ENCODE measurements at regions of chr19 and their contacts with region 1.

Region 1: DNA sequence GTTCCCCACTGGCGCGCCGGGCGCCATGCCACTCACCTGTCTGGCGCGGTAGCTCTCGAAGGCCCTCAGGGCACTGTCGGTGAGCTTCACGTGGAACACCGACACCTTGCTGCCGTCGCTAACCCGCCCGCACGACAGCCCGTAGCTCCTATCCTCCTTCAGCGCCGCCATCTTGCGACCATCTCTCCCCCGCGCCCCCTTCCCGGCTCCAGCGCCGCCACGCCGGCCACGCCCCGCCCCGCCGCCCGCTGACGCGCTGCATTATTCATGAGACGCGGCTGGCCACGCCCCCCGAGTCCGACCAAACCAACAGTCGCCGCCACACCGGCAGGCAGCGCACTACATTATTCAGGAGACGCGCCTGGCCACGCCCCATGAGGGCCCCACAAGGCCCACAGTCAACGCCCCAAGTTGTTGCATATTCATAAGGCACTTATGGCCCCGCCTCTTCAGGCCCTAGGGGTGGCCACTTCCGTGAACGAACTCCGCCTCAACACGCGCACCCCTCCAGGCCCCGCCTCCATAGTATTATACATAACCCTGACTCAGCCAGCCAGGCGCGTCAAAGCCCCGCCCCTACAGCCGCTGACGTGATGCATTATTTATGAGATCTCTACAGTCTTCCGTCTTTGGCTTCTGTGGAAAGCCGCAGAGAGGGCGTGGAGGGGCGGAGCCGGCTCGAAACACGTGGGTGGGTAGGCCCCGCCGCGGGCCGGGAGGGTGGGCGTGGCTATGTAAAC is at the start of gene ELL:
- DNase-seq: peak; percentile 100
- H3K4me3 ChIP-seq: peak within 1 kb of the TSS; percentile 73 to 98 (median 84)
- H3K4me3 Mint-ChIP-seq: peak within 1 kb of the TSS; percentile 95 to 100
- H3K27ac ChIP-seq: peak within 1 kb of the TSS; percentile 87 to 97
- H3K27ac Mint-ChIP-seq: peak within 1 kb of the TSS; percentile 92 to 100 (median 97)
- H3K4me1 ChIP-seq: peaks cover 34 to 35% of the 10 kb centered on the region in 2 donors
- H3K4me1 Mint-ChIP-seq: peaks cover 43% of the 10 kb centered on the region
- H3K27me3 ChIP-seq: no peaks in the 10 kb centered on the region
- H3K27me3 Mint-ChIP-seq: peaks cover 0 to 2% (median 0%) of the 10 kb centered on the region in 3 donors
- CTCF ChIP-seq: no peak
- polyA plus RNA-seq, gene ELL: 12.2 to 35.3 (median 12.6) TPM

Region 2: GRCh38 chr19:18419195-18419698 is 102.8 kb before region 1 on chr19 and contains the start of gene SSBP4:
- intact Hi-C with region 1: no loop called
- DNase-seq: peak; percentile 64 to 69 (median 69)
- H3K4me3 ChIP-seq: peak within 1 kb of the TSS; percentile 49 to 74 (median 59)
- H3K4me3 Mint-ChIP-seq: peak within 1 kb of the TSS; percentile 83 to 91
- H3K27ac ChIP-seq: peak within 1 kb of the TSS; percentile 99
- H3K27ac Mint-ChIP-seq: peak within 1 kb of the TSS; percentile 93 to 100 (median 97)
- H3K4me1 ChIP-seq: peaks cover 67 to 85% of the 10 kb centered on the region in 2 donors
- H3K4me1 Mint-ChIP-seq: peaks cover 75% of the 10 kb centered on the region
- H3K27me3 ChIP-seq: no peaks in the 10 kb centered on the region
- H3K27me3 Mint-ChIP-seq: peaks cover 0 to 6% (median 2%) of the 10 kb centered on the region in 3 donors
- CTCF ChIP-seq: peak; percentile 64
- polyA plus RNA-seq, gene SSBP4: 38.5 to 74.5 (median 48.3) TPM

Region 3: GRCh38 chr19:18464646-18465045 is 57.4 kb before region 1 on chr19:
- intact Hi-C with region 1: no loop called
- DNase-seq: no peak
- H3K4me3 ChIP-seq: no peak overlapping the region
- H3K4me3 Mint-ChIP-seq: no peak overlapping the region
- H3K27ac ChIP-seq: no peak overlapping the region
- H3K27ac Mint-ChIP-seq: peak overlapping the region in 3 of 7 donors; percentile 12 to 70 (median 42)
- H3K4me1 ChIP-seq: peaks cover 0 to 16% of the 10 kb centered on the region in 2 donors
- H3K4me1 Mint-ChIP-seq: peaks cover 25% of the 10 kb centered on the region
- H3K27me3 ChIP-seq: no peaks in the 10 kb centered on the region
- H3K27me3 Mint-ChIP-seq: peaks cover 0 to 3% (median 0%) of the 10 kb centered on the region in 3 donors
- CTCF ChIP-seq: no peak

Region 4: GRCh38 chr19:18478569-18479311 is 43.3 kb before region 1 on chr19:
- intact Hi-C with region 1: loop called in 1 of 2 experiments (anchors 2 kb)
- DNase-seq: peak; percentile 98 to 99 (median 99)
- H3K4me3 ChIP-seq: peak overlapping the region in 2 of 3 experiments; percentile 14 to 58
- H3K4me3 Mint-ChIP-seq: peak overlapping the region; percentile 60 to 84
- H3K27ac ChIP-seq: peak overlapping the region; percentile 96 to 97
- H3K27ac Mint-ChIP-seq: peak overlapping the region; percentile 97 to 99 (median 99)
- H3K4me1 ChIP-seq: peaks cover 84 to 95% of the 10 kb centered on the region in 2 donors
- H3K4me1 Mint-ChIP-seq: peaks cover 82% of the 10 kb centered on the region
- H3K27me3 ChIP-seq: no peaks in the 10 kb centered on the region
- H3K27me3 Mint-ChIP-seq: peaks cover 0 to 3% (median 0%) of the 10 kb centered on the region in 3 donors
- CTCF ChIP-seq: no peak

Region 5: GRCh38 chr19:18503971-18504885 is 17.8 kb before region 1 on chr19:
- intact Hi-C with region 1: loop called in 1 of 2 experiments (anchors 2 kb)
- DNase-seq: peak in 2 of 3 donors; percentile 37 to 65
- H3K4me3 ChIP-seq: peak overlapping the region in 1 of 3 experiments; percentile 61
- H3K4me3 Mint-ChIP-seq: peak overlapping the region; percentile 20 to 39
- H3K27ac ChIP-seq: peak overlapping the region; percentile 95 to 96
- H3K27ac Mint-ChIP-seq: peak overlapping the region; percentile 79 to 99 (median 96)
- H3K4me1 ChIP-seq: peaks cover 95 to 100% of the 10 kb centered on the region in 2 donors
- H3K4me1 Mint-ChIP-seq: peaks cover 98% of the 10 kb centered on the region
- H3K27me3 ChIP-seq: no peaks in the 10 kb centered on the region
- H3K27me3 Mint-ChIP-seq: peaks cover 0 to 3% (median 2%) of the 10 kb centered on the region in 3 donors
- CTCF ChIP-seq: no peak

Region 6: GRCh38 chr19:18571564-18572300 is 49.7 kb after region 1 on chr19 and contains the start of gene UBA52:
- intact Hi-C with region 1: loop called (anchors 1 to 5 kb)
- DNase-seq: peak; percentile 98 to 99 (median 98)
- H3K4me3 ChIP-seq: peak within 1 kb of the TSS; percentile 83 to 94 (median 93)
- H3K4me3 Mint-ChIP-seq: peak within 1 kb of the TSS; percentile 89 to 96
- H3K27ac ChIP-seq: peak within 1 kb of the TSS; percentile 85 to 97
- H3K27ac Mint-ChIP-seq: peak within 1 kb of the TSS; percentile 94 to 98 (median 97)
- H3K4me1 ChIP-seq: peaks cover 16 to 22% of the 10 kb centered on the region in 2 donors
- H3K4me1 Mint-ChIP-seq: peaks cover 19% of the 10 kb centered on the region
- H3K27me3 ChIP-seq: no peaks in the 10 kb centered on the region
- H3K27me3 Mint-ChIP-seq: peaks cover 0 to 3% (median 0%) of the 10 kb centered on the region in 3 donors
- CTCF ChIP-seq: no peak
- polyA plus RNA-seq, gene UBA52: 832 to 3,024 (median 896) TPM

Region 7: DNA sequence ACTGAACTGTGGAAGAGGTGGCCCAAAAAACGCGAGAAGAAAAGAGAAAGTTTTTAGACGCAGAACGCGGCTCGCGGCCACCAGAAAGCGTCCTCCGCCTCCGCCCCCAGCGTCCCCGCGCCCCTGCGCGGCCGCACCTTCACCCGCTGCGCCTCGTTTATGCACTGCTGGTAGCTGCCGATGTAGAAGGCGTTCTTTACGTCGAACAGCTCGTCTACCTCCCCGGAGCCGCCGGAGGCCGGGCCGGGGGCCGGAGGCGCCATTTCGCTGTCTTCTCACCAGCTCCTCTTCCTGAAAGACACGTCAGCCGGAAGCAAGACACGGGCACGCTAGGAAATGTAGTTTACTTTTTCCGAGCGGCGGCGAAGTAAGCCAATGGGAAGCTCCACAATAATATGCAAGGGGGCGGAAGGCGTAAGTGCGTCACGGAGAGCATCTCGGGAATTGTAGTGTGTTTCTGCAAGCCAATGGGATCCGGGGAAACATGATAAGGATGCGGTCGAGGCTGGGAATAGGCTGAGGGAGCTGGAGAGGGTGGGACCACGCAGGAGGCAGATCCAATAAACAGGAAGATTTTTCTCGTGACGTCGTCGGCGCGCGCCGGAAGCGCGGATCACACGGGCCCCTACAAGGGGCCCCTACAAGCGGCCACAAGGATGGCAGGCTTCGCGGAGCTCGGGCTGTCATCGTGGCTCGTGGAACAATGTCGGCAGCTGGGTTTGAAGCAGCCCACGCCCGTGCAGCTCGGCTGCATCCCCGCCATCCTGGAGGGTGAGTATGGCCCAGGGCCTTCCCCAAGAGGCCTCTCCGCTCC is 397.2 kb after region 1 on chr19 and contains the starts of genes COPE and DDX49:
- intact Hi-C with region 1: loop called in 1 of 2 experiments (anchors 5 kb)
- DNase-seq: peak; percentile 99 to 100 (median 100)
- H3K4me3 ChIP-seq: peak within 1 kb of the TSS; percentile 86 to 98 (median 91)
- H3K4me3 Mint-ChIP-seq: peak within 1 kb of the TSS; percentile 92 to 94
- H3K27ac ChIP-seq: peak within 1 kb of the TSS; percentile 71 to 94
- H3K27ac Mint-ChIP-seq: peak within 1 kb of the TSS; percentile 93 to 97 (median 95)
- H3K4me1 ChIP-seq: peaks cover 21 to 26% of the 10 kb centered on the region in 2 donors
- H3K4me1 Mint-ChIP-seq: peaks cover 26% of the 10 kb centered on the region
- H3K27me3 ChIP-seq: no peaks in the 10 kb centered on the region
- H3K27me3 Mint-ChIP-seq: peaks cover 0 to 2% (median 0%) of the 10 kb centered on the region in 3 donors
- CTCF ChIP-seq: no peak
- polyA plus RNA-seq, gene COPE: 331 to 345 (median 345) TPM
- polyA plus RNA-seq, gene DDX49: 24.0 to 40.3 (median 27.5) TPM

Measured in CD14-positive monocyte (primary cell).